ENCODE measurements at regions of chr12 and their contacts with region 1.

Region 1: GRCh38 chr12:132887513-132888351 is at the start of gene CHFR:
- DNase-seq: peak; percentile 98 to 99 (median 99)
- H3K4me3 ChIP-seq: peak within 1 kb of the TSS; percentile 85 to 92 (median 86)
- H3K4me3 Mint-ChIP-seq: peak within 1 kb of the TSS; percentile 97 to 98
- H3K27ac ChIP-seq: peak within 1 kb of the TSS; percentile 89 to 99
- H3K27ac Mint-ChIP-seq: peak within 1 kb of the TSS; percentile 98 to 100 (median 99)
- H3K4me1 ChIP-seq: peaks cover 10 to 15% of the 10 kb centered on the region in 2 donors
- H3K4me1 Mint-ChIP-seq: peaks cover 19% of the 10 kb centered on the region
- H3K27me3 ChIP-seq: no peaks in the 10 kb centered on the region
- H3K27me3 Mint-ChIP-seq: peaks cover 3 to 10% (median 8%) of the 10 kb centered on the region in 3 donors
- CTCF ChIP-seq: no peak
- polyA plus RNA-seq, gene CHFR: 28.0 to 76.3 (median 39.3) TPM

Region 2: GRCh38 chr12:131830335-131830913 is 1057.3 kb before region 1 on chr12:
- intact Hi-C with region 1: no loop called
- DNase-seq: peak; percentile 58 to 69 (median 66)
- H3K4me3 ChIP-seq: peak overlapping the region; percentile 64 to 94 (median 69)
- H3K4me3 Mint-ChIP-seq: peak overlapping the region; percentile 69 to 81
- H3K27ac ChIP-seq: no peak overlapping the region
- H3K27ac Mint-ChIP-seq: no peak overlapping the region
- H3K4me1 ChIP-seq: peaks cover 29 to 38% of the 10 kb centered on the region in 2 donors
- H3K4me1 Mint-ChIP-seq: peaks cover 38% of the 10 kb centered on the region
- H3K27me3 ChIP-seq: peaks cover 0 to 15% of the 10 kb centered on the region in 2 donors
- H3K27me3 Mint-ChIP-seq: peaks cover 2 to 35% (median 35%) of the 10 kb centered on the region in 3 donors
- CTCF ChIP-seq: peak; percentile 88

Region 3: DNA sequence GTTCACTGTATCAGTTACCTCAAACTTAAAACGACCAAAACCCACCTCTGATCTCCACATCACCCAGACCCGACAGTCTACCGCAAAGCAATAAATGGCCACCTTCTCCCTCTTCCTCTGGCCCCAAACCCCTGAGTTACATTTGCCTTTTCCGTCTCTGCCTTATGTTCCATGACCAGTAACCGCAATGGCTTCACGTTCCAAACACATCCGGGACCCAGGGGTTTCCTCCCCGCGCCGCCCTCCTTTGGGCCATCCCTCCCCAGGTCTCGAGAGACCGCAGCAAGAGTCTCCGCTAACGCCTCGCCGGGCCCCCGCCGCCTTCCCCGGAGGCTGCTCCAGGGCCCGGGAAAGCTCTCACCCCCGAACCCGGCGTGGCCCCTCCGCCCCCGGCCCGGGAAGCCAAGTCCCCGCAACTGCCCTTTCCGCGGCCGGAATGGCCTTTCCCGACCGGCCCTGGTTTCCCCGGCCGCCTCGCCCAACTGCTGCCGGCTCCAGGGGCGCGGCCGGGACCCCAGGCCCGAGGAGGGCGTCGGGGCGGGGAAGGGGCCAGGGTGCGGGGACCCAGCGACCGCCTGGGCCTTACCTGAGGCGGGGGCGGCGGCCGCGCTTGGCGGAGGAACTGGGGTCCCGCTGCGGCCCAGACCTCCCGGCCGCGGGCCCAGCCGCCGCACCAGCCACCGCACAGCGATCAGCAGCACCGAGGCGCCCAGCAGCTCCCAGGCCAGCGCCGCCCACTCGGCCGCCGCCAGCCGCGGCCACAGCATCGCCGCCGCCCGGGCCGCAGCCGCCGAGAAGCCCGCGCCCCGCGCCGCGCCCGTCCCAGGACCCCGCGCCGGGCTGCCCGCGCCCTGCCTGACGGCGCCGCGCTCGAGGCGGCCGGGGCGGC is 126.5 kb before region 1 on chr12 and contains the start of gene ANKLE2:
- intact Hi-C with region 1: loop called in 1 of 2 experiments (anchors 10 kb)
- DNase-seq: peak in 2 of 3 donors; percentile 37 to 48
- H3K4me3 ChIP-seq: peak within 1 kb of the TSS; percentile 83 to 95 (median 84)
- H3K4me3 Mint-ChIP-seq: peak within 1 kb of the TSS; percentile 84 to 97
- H3K27ac ChIP-seq: peak within 1 kb of the TSS; percentile 85 to 91
- H3K27ac Mint-ChIP-seq: peak within 1 kb of the TSS; percentile 92 to 97 (median 94)
- H3K4me1 ChIP-seq: peaks cover 27 to 40% of the 10 kb centered on the region in 2 donors
- H3K4me1 Mint-ChIP-seq: peaks cover 30% of the 10 kb centered on the region
- H3K27me3 ChIP-seq: no peaks in the 10 kb centered on the region
- H3K27me3 Mint-ChIP-seq: peaks cover 0 to 2% (median 0%) of the 10 kb centered on the region in 3 donors
- CTCF ChIP-seq: no peak
- polyA plus RNA-seq, gene ANKLE2: 10.1 to 88.4 (median 15.0) TPM

Region 4: GRCh38 chr12:132834181-132834711 is 53.5 kb before region 1 on chr12:
- intact Hi-C with region 1: loop called (anchors 5 kb)
- DNase-seq: no peak
- H3K4me3 ChIP-seq: no peak overlapping the region
- H3K4me3 Mint-ChIP-seq: no peak overlapping the region
- H3K27ac ChIP-seq: no peak overlapping the region
- H3K27ac Mint-ChIP-seq: peak overlapping the region in 2 of 7 donors; percentile 19 to 57
- H3K4me1 ChIP-seq: peaks cover 3 to 4% of the 10 kb centered on the region in 2 donors
- H3K4me1 Mint-ChIP-seq: peaks cover 7% of the 10 kb centered on the region
- H3K27me3 ChIP-seq: no peaks in the 10 kb centered on the region
- H3K27me3 Mint-ChIP-seq: peaks cover 0 to 3% (median 1%) of the 10 kb centered on the region in 3 donors
- CTCF ChIP-seq: no peak

Region 5: GRCh38 chr12:132908145-132909044 is 20.7 kb after region 1 on chr12:
- intact Hi-C with region 1: loop called in 1 of 2 experiments (anchors 1 kb)
- DNase-seq: peak; percentile 56 to 66 (median 66)
- H3K4me3 ChIP-seq: peak overlapping the region; percentile 13 to 76 (median 45)
- H3K4me3 Mint-ChIP-seq: peak overlapping the region; percentile 80 to 94
- H3K27ac ChIP-seq: no peak overlapping the region
- H3K27ac Mint-ChIP-seq: peak overlapping the region in 5 of 7 donors; percentile 21 to 90 (median 70)
- H3K4me1 ChIP-seq: peaks cover 13 to 17% of the 10 kb centered on the region in 2 donors
- H3K4me1 Mint-ChIP-seq: peaks cover 16% of the 10 kb centered on the region
- H3K27me3 ChIP-seq: peaks cover 15 to 52% of the 10 kb centered on the region in 2 donors
- H3K27me3 Mint-ChIP-seq: peaks cover 43 to 59% (median 58%) of the 10 kb centered on the region in 3 donors
- CTCF ChIP-seq: no peak

Measured in CD14-positive monocyte (primary cell).